Astrocyte of the cerebellum (primary cell): ENCODE measurements at regions of chr18 and their contacts with region 1.

Region 1: DNA sequence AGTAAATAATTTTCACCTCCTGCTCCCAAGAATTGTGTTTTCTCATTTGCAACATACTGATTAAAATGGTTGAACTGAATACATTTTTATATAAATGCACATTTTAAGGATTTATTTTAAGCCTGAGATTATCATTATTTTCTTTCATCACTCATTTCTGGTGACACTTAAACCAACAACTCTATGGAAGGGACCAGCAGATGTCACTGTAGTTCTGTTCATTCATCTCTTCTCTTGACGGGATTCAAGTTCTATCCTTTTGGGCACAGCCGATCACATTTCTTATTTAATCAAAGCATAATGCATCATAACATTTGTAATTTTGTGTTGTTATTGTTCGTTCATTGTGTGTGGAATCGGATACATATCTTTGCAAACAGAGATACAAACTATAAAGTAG is 417.9 kb downstream of the HRH4 start:
- DNase-seq: peak; percentile 49
- H3K4me3 ChIP-seq: no peak overlapping the region
- CTCF ChIP-seq: peak; percentile 54

Region 2: DNA sequence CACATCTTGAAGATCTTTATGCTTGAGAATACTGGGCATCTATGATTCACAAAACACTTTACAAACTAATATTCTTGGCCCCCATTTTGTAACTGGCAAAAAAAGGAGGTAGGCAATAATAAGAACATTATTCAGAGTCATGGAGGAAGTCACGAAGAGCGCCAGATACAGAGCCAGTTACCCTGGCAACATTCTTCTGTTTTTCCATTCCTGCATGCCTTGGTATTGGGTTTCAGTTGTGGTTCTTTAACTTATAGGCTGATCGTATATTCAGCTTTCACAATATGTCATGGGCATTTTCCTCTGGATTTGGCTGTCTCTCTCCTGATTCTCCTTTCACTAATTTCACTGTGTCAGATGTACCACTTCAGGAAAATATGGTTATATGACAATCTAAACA is 183.1 kb before region 1 on chr18:
- in situ Hi-C with region 1: no loop called
- DNase-seq: no peak
- H3K4me3 ChIP-seq: no peak overlapping the region
- CTCF ChIP-seq: no peak

Region 3: GRCh38 chr18:25351777-25352628 is 473.7 kb after region 1 on chr18 and contains the start of gene ZNF521:
- in situ Hi-C with region 1: loop called (anchors 5 kb)
- DNase-seq: peak; percentile 79
- H3K4me3 ChIP-seq: peak within 1 kb of the TSS; percentile 90
- CTCF ChIP-seq: peak; percentile 40